ENCODE measurements at regions of chr21 and their contacts with region 1.

Region 1: DNA sequence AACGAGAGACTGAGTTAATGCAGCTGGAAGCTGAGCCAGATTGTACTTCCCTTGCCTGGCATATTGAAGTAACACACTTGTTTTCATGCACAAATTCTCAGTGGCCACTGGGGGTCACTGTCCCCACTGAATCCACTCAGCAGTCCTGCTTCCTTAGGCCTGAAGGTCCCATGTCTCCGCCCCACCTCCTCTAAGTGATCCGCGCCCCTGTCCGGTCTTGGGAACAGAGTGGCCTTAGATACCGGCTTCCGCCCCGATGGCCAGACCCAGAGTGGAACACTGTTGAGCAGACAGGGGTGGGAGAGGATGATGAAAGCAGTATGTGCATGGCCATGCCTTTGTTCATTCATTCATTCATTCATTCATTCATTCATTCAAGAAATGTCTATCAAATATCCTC is 34.8 kb downstream of the CHAF1B start:
- DNase-seq: peak; percentile 90
- ATAC-seq: peak; percentile 92
- H3K4me3 ChIP-seq: no peak overlapping the region
- H3K27ac ChIP-seq: no peak overlapping the region; the same call in 1 of the 2 replicates
- H3K4me1 ChIP-seq: no peaks in the 10 kb centered on the region; the same call in 1 of the 2 replicates
- H3K27me3 ChIP-seq: no peaks in the 10 kb centered on the region
- CTCF ChIP-seq: peak; percentile 88

Region 2: DNA sequence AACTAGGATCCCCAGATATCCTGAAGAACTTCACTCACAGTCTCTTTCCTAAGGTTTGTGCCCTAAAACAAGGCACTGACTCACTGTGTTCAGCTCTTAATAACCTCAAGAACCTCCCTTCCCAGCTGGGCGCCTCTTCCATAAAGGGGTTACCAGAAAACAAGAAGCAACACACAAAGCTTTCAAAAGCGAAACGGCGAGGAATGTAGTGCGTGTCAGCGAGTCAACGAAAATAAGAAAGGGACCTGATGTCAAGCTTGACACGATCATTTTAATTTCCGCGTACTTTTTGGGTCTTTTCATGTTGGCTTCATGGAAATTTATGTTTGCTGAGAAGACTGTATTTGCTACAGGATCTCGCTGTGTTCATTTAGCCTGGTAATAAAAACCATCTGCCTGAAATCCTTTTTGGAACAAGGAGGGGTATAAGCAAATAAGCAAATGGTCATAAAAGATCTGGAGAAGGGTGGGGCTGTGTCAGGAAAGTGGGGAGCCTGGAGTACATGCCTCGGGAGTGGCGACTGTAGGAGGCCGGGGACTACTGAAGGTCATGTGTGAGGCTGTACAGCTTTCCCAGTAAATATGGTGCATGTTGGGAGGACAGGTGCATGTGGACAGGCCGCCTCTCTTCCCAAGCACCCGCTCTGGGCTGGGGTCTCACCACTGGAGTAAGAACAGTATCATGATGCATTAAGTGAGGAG is 71.4 kb after region 1 on chr21:
- CTCF ChIA-PET with region 1: no interaction called
- POLR2A ChIA-PET with region 1: no interaction called
- intact Hi-C with region 1: no loop called
- DNase-seq: no peak
- ATAC-seq: peak; percentile 18
- H3K4me3 ChIP-seq: no peak overlapping the region
- H3K27ac ChIP-seq: no peak overlapping the region
- H3K4me1 ChIP-seq: peaks cover 8% of the 10 kb centered on the region
- H3K27me3 ChIP-seq: no peaks in the 10 kb centered on the region
- CTCF ChIP-seq: no peak

Region 3: DNA sequence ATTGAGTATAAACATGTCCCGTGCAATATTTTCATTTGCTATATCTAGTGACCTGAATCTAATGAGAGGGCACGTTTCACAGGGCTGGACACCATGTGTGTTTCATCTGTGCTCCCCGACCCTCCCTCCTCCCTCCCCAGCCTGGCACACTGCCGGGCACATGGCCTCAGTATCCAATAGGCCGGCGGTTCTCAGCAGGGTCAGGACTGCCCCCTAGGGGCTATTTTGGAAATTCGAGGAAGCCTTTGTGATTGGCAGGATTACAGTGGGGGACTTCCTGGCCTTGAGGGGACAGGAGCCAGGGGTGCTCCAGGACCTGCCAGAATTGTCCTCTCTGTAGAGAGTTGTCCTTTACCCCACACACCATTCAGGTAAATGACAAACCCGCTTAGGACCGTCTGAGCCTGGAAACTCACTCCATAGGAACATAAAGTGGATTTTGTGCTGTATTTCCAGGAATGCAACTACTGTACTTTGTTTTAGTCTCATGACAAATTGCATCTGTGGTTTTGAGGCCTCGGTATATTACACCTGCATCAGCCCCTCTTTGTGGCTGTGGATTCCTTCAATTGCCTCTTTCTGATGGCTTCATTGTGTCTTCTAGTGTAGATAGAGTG is 169.5 kb after region 1 on chr21:
- CTCF ChIA-PET with region 1: interaction called, 3 read pairs
- POLR2A ChIA-PET with region 1: no interaction called
- intact Hi-C with region 1: loop called (anchors 2 kb)
- DNase-seq: peak; percentile 70
- ATAC-seq: no peak; the same call in 1 of the 2 replicates
- H3K4me3 ChIP-seq: no peak overlapping the region
- H3K27ac ChIP-seq: no peak overlapping the region
- H3K4me1 ChIP-seq: peaks cover 18% of the 10 kb centered on the region
- H3K27me3 ChIP-seq: no peaks in the 10 kb centered on the region
- CTCF ChIP-seq: peak; percentile 87